ENCODE measurements at regions of chr6 and their contacts with region 1.

Region 1: GRCh38 chr6:119147101-119148053 is 68.9 kb upstream of the FAM184A start:
- DNase-seq: peak; percentile 78 to 99
- H3K4me3 ChIP-seq: no peak overlapping the region
- H3K27ac ChIP-seq: peak overlapping the region; percentile 75
- H3K4me1 ChIP-seq: peaks cover 43% of the 10 kb centered on the region
- H3K27me3 ChIP-seq: no peaks in the 10 kb centered on the region
- CTCF ChIP-seq: no peak

Region 2: GRCh38 chr6:119349323-119350042 is 202.1 kb after region 1 on chr6 and contains the start of gene MAN1A1:
- CTCF ChIA-PET with region 1: interaction called, 3 read pairs
- POLR2A ChIA-PET with region 1: no interaction called
- intact Hi-C with region 1: loop called (anchors 5 kb)
- DNase-seq: peak; percentile 69 to 88
- H3K4me3 ChIP-seq: peak within 1 kb of the TSS; percentile 73
- H3K27ac ChIP-seq: peak within 1 kb of the TSS; percentile 19
- H3K4me1 ChIP-seq: peaks cover 40% of the 10 kb centered on the region
- H3K27me3 ChIP-seq: no peaks in the 10 kb centered on the region
- CTCF ChIP-seq: 0 out of 2 replicates have a peak, but pooled peaks have one; percentile 23
- total RNA-seq, gene MAN1A1: 13.3 and 13.4 TPM in 2 replicates

Region 3: DNA sequence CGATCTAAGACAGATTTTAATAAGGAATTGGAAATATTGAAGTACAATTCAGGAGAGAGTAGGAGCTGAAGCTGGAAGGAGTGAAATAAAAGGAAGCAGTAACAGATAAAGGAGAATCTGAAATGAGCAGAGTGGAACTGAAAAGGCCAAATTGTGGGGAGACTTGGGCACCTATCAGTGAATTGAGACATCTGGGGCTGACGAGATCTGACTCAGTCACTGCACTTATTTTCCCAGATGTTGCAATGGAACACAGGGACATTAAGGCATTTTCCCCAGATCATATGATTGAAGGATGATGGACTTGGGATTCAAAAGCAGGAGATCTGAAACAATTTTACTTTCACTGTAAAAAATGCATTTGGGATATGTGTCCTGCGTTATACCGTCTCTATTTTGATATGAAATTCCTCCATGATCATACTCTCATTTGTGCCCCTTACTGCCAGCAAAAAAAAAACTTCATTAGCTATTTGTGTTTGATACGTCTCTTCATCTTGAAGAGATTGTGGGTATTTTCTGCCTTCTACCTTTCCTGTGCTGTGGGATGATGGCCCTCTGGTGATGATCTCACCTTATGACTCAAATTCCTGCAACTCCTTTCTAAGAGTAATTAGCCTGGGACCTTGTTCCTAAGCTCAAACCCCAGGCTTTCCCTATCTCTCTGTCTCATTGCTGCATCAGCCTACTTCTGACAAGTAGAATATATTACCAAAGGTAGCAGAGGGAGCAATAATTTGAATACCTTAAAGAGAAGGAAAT is 480.7 kb after region 1 on chr6:
- CTCF ChIA-PET with region 1: interaction called, 3 read pairs
- POLR2A ChIA-PET with region 1: no interaction called
- intact Hi-C with region 1: loop called (anchors 5 kb)
- DNase-seq: peak in 1 of 2 experiments; percentile 44
- H3K4me3 ChIP-seq: no peak overlapping the region
- H3K27ac ChIP-seq: peak overlapping the region; percentile 61
- H3K4me1 ChIP-seq: peaks cover 29% of the 10 kb centered on the region
- H3K27me3 ChIP-seq: no peaks in the 10 kb centered on the region
- CTCF ChIP-seq: no peak

Region 4: DNA sequence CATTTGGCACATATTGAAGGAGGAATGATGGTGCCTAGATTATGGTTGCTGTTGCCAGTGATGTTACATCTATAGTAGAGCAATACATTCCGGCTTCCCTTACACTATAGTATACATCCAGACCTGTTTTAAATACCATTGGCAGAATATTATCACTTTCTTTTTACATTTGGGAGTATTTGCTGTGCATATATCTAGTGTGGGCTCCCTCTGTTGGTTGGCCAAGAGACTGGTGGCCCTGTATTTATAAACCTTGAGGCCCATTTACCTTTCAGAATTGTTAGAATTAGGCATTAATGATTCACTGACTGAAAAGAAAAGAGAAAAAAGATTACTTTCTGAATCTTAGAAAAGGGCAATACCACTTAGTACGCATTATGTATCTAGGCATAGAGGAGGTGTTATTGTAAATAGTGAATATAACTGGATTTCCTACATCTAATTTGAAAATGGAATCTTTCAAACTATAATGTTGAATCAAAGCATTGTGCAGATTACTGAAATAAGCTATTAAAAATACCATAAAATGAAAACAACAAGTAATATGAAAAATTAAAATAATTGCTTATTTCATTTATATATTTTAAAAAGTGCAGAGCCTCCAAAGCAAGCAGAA is 831.0 kb after region 1 on chr6:
- CTCF ChIA-PET with region 1: no interaction called
- POLR2A ChIA-PET with region 1: no interaction called
- intact Hi-C with region 1: loop called (anchors 2 kb)
- DNase-seq: no peak
- H3K4me3 ChIP-seq: no peak overlapping the region
- H3K27ac ChIP-seq: no peak overlapping the region
- H3K4me1 ChIP-seq: no peaks in the 10 kb centered on the region
- H3K27me3 ChIP-seq: no peaks in the 10 kb centered on the region
- CTCF ChIP-seq: peak; percentile 81

Region 5: GRCh38 chr6:120378582-120379220 is 1231.3 kb after region 1 on chr6:
- CTCF ChIA-PET with region 1: no interaction called
- POLR2A ChIA-PET with region 1: no interaction called
- intact Hi-C with region 1: loop called (anchors 10 kb)
- DNase-seq: peak in 1 of 2 experiments; percentile 47
- H3K4me3 ChIP-seq: no peak overlapping the region
- H3K27ac ChIP-seq: no peak overlapping the region
- H3K4me1 ChIP-seq: no peaks in the 10 kb centered on the region
- H3K27me3 ChIP-seq: no peaks in the 10 kb centered on the region
- CTCF ChIP-seq: peak; percentile 92